ENCODE measurements at regions of chr17 and their contacts with region 1.

Region 1: GRCh38 chr17:38415250-38416194 is 12.7 kb upstream of the ARHGAP23 start:
- DNase-seq: peak; percentile 52
- ATAC-seq: peak; percentile 34
- H3K4me3 Mint-ChIP-seq: peak overlapping the region; percentile 65
- H3K27ac Mint-ChIP-seq: peak overlapping the region; percentile 84
- H3K4me1 Mint-ChIP-seq: peaks cover 6% of the 10 kb centered on the region
- H3K27me3 Mint-ChIP-seq: peaks cover 31% of the 10 kb centered on the region

Region 2: GRCh38 chr17:38351412-38352222 is 63.9 kb before region 1 on chr17 and contains the start of gene SOCS7:
- POLR2A ChIA-PET with region 1: interaction called, 11 read pairs
- DNase-seq: peak; percentile 97
- ATAC-seq: peak; percentile 83
- H3K4me3 Mint-ChIP-seq: peak within 1 kb of the TSS; percentile 94
- H3K27ac Mint-ChIP-seq: peak within 1 kb of the TSS; percentile 92
- H3K4me1 Mint-ChIP-seq: peaks cover 28% of the 10 kb centered on the region
- H3K27me3 Mint-ChIP-seq: no peaks in the 10 kb centered on the region
- total RNA-seq, gene SOCS7: 16.4 to 19.0 TPM

Region 3: GRCh38 chr17:38464723-38465390 is 49.3 kb after region 1 on chr17:
- POLR2A ChIA-PET with region 1: no interaction called
- DNase-seq: no peak
- ATAC-seq: no peak
- H3K4me3 Mint-ChIP-seq: no peak overlapping the region
- H3K27ac Mint-ChIP-seq: no peak overlapping the region
- H3K4me1 Mint-ChIP-seq: no peaks in the 10 kb centered on the region
- H3K27me3 Mint-ChIP-seq: peaks cover 4% of the 10 kb centered on the region